Testis (tissue), 5 donors: ENCODE measurements at regions of chr6 and their contacts with region 1.

Region 1: DNA sequence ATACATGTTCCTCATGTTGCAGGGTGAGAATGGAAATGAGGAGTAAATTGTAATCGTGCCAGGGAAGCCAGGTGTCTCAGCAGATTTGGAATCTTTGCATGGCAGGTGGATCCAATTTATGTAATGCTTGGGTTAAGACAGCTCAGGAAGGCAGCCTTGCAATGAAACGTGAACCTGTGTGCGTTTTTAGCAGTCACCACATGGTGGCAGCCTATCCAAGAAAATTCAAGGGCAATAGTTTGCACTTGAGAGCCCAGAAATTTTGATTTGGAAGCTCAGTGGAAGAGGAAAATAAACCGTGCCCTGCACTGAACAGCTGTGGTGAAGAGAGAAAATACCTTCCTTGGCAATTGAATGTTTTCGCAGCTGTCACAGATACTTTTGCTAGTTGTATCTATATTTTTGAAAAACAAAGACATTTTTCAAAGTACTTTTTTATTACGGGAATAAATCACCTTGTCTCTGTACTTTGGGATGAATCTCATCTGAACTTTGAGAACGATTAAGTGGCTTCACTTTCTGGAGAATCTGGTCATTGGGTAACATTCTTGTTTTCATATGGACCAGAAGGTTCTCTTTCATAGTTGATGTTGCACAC is 26.5 kb downstream of the MTHFD1L start:
- DNase-seq: peak; percentile 82
- H3K4me3 ChIP-seq: no peak overlapping the region
- H3K27ac ChIP-seq: no peak overlapping the region
- H3K4me1 ChIP-seq: no peaks in the 10 kb centered on the region
- H3K27me3 ChIP-seq: no peaks in the 10 kb centered on the region
- CTCF ChIP-seq: peak; percentile 69 to 89 (median 81)
- POLR2A ChIP-seq: no peak

Region 2: DNA sequence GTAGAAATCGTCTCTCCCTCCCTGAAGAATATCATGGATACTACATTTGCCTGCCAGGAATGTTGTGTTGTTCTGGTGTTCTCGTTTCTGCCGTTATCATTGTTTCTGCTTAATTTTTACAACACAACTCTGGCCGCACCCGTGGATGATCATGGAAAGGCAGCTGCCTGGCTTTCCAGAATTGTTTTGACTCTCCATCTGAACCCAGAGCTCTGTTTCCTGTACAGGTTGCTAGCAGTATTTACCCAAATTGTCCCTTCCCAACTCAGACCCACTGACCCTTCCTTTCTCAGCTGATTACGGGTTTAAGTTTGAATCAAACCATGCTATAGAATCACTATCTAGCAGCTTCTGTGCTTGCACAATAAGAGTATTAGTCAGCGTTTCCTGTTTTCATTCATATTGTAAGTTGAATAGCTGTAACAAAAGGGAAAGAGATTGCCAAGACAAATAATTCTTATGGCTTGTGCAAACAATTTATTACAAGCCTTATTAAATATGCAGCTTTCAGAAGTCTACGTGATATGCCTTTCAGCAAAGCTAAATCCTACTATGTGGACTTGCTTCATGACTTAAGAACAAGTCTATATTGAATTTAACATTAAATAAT is 112.5 kb after region 1 on chr6:
- intact Hi-C with region 1: no loop called
- DNase-seq: no peak
- H3K4me3 ChIP-seq: no peak overlapping the region
- H3K27ac ChIP-seq: peak overlapping the region in 1 of 2 donors; percentile 16
- H3K4me1 ChIP-seq: peaks cover 13% of the 10 kb centered on the region
- H3K27me3 ChIP-seq: no peaks in the 10 kb centered on the region
- CTCF ChIP-seq: no peak
- POLR2A ChIP-seq: no peak

Region 3: DNA sequence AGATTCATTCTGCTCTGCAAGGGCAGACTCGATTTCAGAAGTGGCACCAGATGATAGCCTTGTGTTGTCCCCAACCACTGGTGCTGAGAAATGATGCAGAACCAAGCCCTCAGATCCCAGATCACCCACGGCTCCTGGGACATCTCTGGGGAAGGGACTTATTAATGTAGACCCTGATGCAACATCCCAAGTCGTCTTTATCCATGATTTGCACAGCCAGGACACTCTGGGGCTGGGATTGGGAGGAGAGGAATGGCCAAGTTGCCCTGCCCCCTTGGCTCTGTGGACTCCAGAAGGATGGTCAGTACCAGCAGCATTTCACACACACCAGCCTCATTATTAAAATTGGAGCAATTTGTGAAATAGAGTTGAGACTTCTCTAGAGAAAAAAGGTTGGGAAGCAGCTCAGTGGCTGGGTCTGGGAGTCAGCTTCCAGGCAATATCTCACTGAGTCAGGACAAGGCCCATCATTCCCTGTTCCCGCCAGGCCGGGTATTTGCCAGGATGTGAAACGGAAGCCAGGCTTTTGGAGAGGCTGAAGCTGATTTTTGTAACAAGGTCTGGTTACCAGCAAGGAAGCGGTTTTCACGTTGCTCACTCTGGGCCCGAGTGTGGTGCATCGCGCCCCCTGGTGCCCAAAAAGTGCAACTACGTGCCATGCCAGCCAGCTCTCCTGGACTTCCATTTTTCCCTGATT is 432.0 kb after region 1 on chr6:
- intact Hi-C with region 1: loop called (anchors 10 kb)
- DNase-seq: peak; percentile 87
- H3K4me3 ChIP-seq: no peak overlapping the region
- H3K27ac ChIP-seq: peak overlapping the region; percentile 6 to 71
- H3K4me1 ChIP-seq: peaks cover 14% of the 10 kb centered on the region
- H3K27me3 ChIP-seq: no peaks in the 10 kb centered on the region
- CTCF ChIP-seq: peak; percentile 96 to 99 (median 99)
- POLR2A ChIP-seq: no peak